ENCODE measurements at regions of chr1 and their contacts with region 1.

Region 1: GRCh38 chr1:152052606-152053005 is 15.8 kb upstream of the S100A11 start:
- DNase-seq: peak; percentile 85 to 90
- ATAC-seq: peak; percentile 63 to 77 (median 67)
- H3K4me3 ChIP-seq: no peak overlapping the region
- H3K27ac ChIP-seq: no peak overlapping the region
- H3K4me1 ChIP-seq: no peaks in the 10 kb centered on the region
- H3K27me3 ChIP-seq: peaks cover 0 to 3% (median 0%) of the 10 kb centered on the region in 3 donors
- CTCF ChIP-seq: peak; percentile 88

Region 2: GRCh38 chr1:152440635-152441471 is 388.2 kb after region 1 on chr1:
- intact Hi-C with region 1: loop called in 1 of 2 experiments (anchors 5 kb)
- DNase-seq: peak; percentile 51 to 75
- ATAC-seq: peak; percentile 63 to 81 (median 74)
- H3K4me3 ChIP-seq: no peak overlapping the region
- H3K27ac ChIP-seq: no peak overlapping the region
- H3K4me1 ChIP-seq: no peaks in the 10 kb centered on the region
- H3K27me3 ChIP-seq: peaks cover 0 to 3% (median 0%) of the 10 kb centered on the region in 3 donors
- CTCF ChIP-seq: peak; percentile 60